MCF 10A (cell line): ENCODE measurements at regions of chr1 and their contacts with region 1.

Region 1: GRCh38 chr1:155050560-155051341 is at the start of gene ADAM15:
- DNase-seq: peak; percentile 84
- H3K4me3 Mint-ChIP-seq: peak within 1 kb of the TSS; percentile 90
- H3K27ac Mint-ChIP-seq: peak within 1 kb of the TSS; percentile 80
- H3K4me1 Mint-ChIP-seq: peaks cover 33% of the 10 kb centered on the region
- H3K27me3 Mint-ChIP-seq: no peaks in the 10 kb centered on the region
- CTCF ChIP-seq: peak; percentile 99
- total RNA-seq, gene ADAM15: 385 and 456 TPM in 2 replicates

Region 2: DNA sequence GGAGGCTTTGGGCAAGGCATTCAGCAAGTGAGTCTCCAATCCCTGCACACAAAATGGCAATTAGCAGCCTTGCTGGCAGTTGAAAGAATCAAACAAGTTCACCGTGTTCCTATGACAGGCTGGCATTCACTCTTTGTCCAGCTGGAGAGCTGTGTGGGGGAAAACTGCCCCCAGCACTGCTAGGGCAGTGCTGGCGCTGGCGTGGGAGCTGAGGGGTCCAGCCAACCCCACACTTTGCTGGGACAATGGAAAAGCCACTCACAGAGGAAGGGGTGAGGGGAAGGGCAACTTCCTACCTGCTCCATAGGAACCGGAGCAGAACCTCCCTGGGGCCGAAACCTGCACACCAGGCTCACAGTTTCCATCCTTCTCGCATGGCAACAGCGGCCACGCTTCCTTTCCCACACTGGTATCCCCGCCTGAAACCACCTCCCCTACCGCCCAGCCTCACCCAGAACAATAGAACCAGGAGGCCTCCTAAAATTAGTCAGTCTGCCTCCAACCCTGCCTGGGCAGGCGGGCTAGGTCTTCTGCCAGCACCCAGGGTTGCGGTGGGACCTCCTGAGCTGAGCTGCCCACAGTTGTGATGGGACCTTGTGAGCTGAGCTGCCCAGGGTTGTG is 153.9 kb before region 1 on chr1:
- CTCF ChIA-PET with region 1: no interaction called
- POLR2A ChIA-PET with region 1: no interaction called
- intact Hi-C with region 1: no loop called
- DNase-seq: no peak
- H3K4me3 Mint-ChIP-seq: no peak overlapping the region
- H3K27ac Mint-ChIP-seq: no peak overlapping the region
- H3K4me1 Mint-ChIP-seq: no peaks in the 10 kb centered on the region
- H3K27me3 Mint-ChIP-seq: peaks cover 42% of the 10 kb centered on the region
- CTCF ChIP-seq: no peak

Region 3: GRCh38 chr1:154936555-154937084 is 114.1 kb before region 1 on chr1 and contains the start of gene PMVK:
- CTCF ChIA-PET with region 1: interaction called, 5 read pairs
- POLR2A ChIA-PET with region 1: interaction called, 10 read pairs
- intact Hi-C with region 1: no loop called
- DNase-seq: peak; percentile 99
- H3K4me3 Mint-ChIP-seq: peak within 1 kb of the TSS; percentile 90
- H3K27ac Mint-ChIP-seq: peak within 1 kb of the TSS; percentile 100
- H3K4me1 Mint-ChIP-seq: peaks cover 49% of the 10 kb centered on the region
- H3K27me3 Mint-ChIP-seq: no peaks in the 10 kb centered on the region
- CTCF ChIP-seq: peak; percentile 26
- total RNA-seq, gene PMVK: 57.7 and 68.9 TPM in 2 replicates

Region 4: DNA sequence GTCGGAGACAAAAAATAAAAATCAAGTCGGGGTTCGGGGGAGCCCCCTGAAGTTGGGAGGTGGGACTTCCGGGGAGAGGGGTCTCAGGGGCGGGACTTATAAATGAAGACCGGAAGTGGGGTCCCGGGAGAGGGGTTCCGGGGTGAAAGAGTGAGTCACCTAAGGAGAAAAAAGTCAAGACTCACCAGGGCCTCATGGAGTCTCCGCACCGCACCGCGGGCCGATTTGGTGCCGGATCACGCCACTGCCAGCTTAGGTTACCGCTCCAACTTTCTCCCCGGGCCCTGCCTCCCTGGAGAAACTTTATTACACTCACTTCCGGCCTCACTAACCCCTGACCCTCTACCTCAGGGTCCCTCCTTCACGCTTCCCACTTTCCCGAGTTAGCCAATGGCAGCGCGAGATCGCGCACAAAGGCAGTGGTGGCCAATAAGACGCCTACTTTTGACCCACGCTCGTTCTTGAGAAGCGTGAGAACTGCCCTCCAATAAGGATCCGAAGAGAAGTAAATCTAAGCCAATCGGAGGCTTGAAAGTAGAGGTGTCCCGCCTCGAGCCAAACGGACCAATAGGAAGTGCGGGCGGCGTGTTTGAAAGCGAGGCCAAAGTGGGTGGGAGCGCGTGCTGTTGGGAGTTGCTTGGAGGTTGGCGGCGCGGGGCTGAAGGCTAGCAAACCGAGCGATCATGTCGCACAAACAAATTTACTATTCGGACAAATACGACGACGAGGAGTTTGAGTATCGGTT is 76.5 kb before region 1 on chr1 and contains the start of gene CKS1B:
- CTCF ChIA-PET with region 1: interaction called, 18 read pairs
- POLR2A ChIA-PET with region 1: interaction called, 156 read pairs
- intact Hi-C with region 1: loop called (anchors 2 kb)
- DNase-seq: peak; percentile 100
- H3K4me3 Mint-ChIP-seq: no peak within 1 kb of the TSS
- H3K27ac Mint-ChIP-seq: no peak within 1 kb of the TSS
- H3K4me1 Mint-ChIP-seq: peaks cover 32% of the 10 kb centered on the region
- H3K27me3 Mint-ChIP-seq: no peaks in the 10 kb centered on the region
- CTCF ChIP-seq: no peak
- total RNA-seq, gene CKS1B: 285 and 289 TPM in 2 replicates

Region 5: GRCh38 chr1:155017041-155017945 is 33.5 kb before region 1 on chr1:
- CTCF ChIA-PET with region 1: interaction called, 390 read pairs
- POLR2A ChIA-PET with region 1: interaction called, 56 read pairs
- intact Hi-C with region 1: no loop called
- DNase-seq: peak; percentile 99
- H3K4me3 Mint-ChIP-seq: peak overlapping the region; percentile 62
- H3K27ac Mint-ChIP-seq: peak overlapping the region; percentile 80
- H3K4me1 Mint-ChIP-seq: peaks cover 78% of the 10 kb centered on the region
- H3K27me3 Mint-ChIP-seq: no peaks in the 10 kb centered on the region
- CTCF ChIP-seq: peak; percentile 100

Region 6: GRCh38 chr1:155063550-155064110 is 12.9 kb after region 1 on chr1 and contains the start of gene EFNA4:
- CTCF ChIA-PET with region 1: interaction called, 231 read pairs
- POLR2A ChIA-PET with region 1: interaction called, 59 read pairs
- intact Hi-C with region 1: loop called (anchors 1 kb)
- DNase-seq: peak; percentile 96
- H3K4me3 Mint-ChIP-seq: peak within 1 kb of the TSS; percentile 81
- H3K27ac Mint-ChIP-seq: peak within 1 kb of the TSS; percentile 3
- H3K4me1 Mint-ChIP-seq: peaks cover 31% of the 10 kb centered on the region
- H3K27me3 Mint-ChIP-seq: no peaks in the 10 kb centered on the region
- CTCF ChIP-seq: no peak
- total RNA-seq, gene EFNA4: 7.4 and 9.5 TPM in 2 replicates

Region 7: DNA sequence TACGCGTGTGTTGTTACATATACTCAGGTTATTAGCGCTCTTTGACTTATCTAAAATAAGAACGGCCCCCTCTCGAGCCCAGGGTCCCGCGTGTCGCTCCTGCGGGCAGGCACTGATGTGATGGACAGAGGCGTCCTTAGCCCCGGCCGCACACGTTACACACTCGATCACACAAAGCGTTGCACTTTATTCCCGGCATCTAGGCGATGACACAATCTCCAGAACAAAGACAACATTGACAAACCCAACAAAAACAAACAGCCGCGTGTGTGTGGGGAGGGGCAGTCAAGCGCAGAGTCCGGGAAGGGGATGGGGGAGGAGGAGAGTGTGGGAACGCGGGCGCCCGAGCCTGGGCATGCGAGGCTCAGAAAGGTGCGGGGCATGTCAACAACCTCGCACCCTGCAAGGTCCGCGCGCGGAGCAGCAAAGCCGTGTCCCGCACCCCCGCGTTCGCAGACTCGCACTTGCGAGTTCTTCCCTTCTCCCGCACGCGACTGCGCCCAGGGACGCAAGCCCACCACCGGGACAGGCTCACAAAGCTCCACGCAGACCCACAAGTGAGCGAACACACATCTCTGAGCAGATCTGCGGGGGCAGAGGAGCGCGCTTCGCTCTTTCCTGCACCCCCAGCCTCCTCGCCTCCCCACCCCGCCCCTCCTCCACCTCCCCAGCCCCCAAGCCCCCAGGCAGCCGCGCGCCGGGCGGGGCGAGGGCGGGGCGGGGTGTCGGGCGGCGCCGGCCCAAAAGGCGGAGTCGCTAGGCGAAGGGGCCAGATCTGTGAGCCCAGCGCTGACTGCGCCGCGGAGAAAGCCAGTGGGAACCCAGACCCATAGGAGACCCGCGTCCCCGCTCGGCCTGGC is 76.6 kb after region 1 on chr1 and contains the start of gene EFNA1:
- CTCF ChIA-PET with region 1: interaction called, 4 read pairs
- POLR2A ChIA-PET with region 1: interaction called, 22 read pairs
- intact Hi-C with region 1: no loop called
- DNase-seq: peak; percentile 99
- H3K4me3 Mint-ChIP-seq: peak within 1 kb of the TSS; percentile 100
- H3K27ac Mint-ChIP-seq: peak within 1 kb of the TSS; percentile 90
- H3K4me1 Mint-ChIP-seq: peaks cover 60% of the 10 kb centered on the region
- H3K27me3 Mint-ChIP-seq: no peaks in the 10 kb centered on the region
- CTCF ChIP-seq: no peak
- total RNA-seq, gene EFNA1: 38.9 and 42.3 TPM in 2 replicates